ENCODE measurements at regions of chr2 and their contacts with region 1.

Region 1: DNA sequence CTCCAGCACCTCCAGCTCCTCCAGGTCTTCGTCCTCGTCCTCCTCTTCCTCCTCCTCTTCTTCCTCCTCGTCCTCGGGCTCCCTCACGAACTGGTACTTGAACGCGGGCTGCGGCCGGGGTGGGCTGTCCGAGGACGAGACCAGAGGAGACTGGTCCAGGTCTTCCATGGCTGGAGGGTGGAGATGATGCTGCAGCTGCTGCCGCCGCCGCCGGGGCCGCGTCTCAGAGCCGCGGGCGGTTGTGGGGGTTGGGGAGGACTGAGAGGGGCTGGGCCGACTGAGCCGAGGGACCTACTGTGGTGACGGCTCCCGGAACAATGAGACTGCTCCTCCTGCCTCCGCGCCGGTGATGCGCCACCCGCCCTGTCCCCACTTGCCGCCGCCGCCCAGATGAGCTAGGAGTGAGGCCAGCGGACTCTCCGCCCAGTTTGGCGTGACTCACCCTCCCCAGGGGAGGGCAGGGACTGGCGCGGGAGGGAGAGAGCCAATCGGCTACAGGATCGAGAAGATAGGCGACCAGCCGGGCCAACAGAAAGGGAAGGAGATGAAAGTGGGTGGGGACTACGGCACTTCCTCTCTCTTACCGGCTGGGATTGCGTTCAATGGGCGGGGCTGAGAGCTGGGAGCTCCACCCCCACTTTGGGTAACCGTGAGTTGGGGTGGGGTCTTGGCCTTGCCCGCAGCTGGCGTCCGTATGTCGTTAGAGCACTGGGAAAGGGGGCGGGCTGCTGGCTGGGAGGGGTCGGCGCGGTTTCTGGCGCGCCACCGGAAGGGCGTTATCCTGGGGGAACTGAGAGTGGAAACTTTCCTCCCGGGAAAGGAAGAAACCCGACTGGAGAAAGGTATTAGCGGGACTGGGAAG is at the start of gene RTN4:
- DNase-seq: peak; percentile 99
- ATAC-seq: peak; percentile 90
- H3K4me3 ChIP-seq: peak within 1 kb of the TSS; percentile 87 to 97 (median 94)
- H3K27ac ChIP-seq: peak within 1 kb of the TSS; percentile 84
- H3K4me1 ChIP-seq: peaks cover 41% of the 10 kb centered on the region
- H3K27me3 ChIP-seq: no peaks in the 10 kb centered on the region; a peak in 1 of 5 replicates
- CTCF ChIP-seq: peak; percentile 37; the same call in 1 of the 2 replicates
- EP300 ChIP-seq: no peak
- POLR2A ChIP-seq: peak; percentile 90 to 99
- RAD21 ChIP-seq: peak; percentile 53; the same call in 1 of the 2 replicates
- total RNA-seq, gene RTN4: 67.4 and 98.4 TPM in 2 replicates

Region 2: GRCh38 chr2:54545702-54546450 is 504.5 kb before region 1 on chr2:
- CTCF ChIA-PET with region 1: no interaction called
- POLR2A ChIA-PET with region 1: no interaction called
- in situ Hi-C with region 1: no loop called
- intact Hi-C with region 1: no loop called
- DNase-seq: peak; percentile 97
- ATAC-seq: peak; percentile 99
- H3K4me3 ChIP-seq: peak overlapping the region in 2 of 3 experiments; percentile 9 to 19; a peak in 3 of 6 replicates
- H3K27ac ChIP-seq: peak overlapping the region; percentile 80
- H3K4me1 ChIP-seq: peaks cover 72% of the 10 kb centered on the region
- H3K27me3 ChIP-seq: no peaks in the 10 kb centered on the region
- CTCF ChIP-seq: 0 out of 2 replicates have a peak, but pooled peaks have one; percentile 1
- EP300 ChIP-seq: peak; percentile 92 to 95
- POLR2A ChIP-seq: peak in 1 of 2 experiments; percentile 35; a peak in 1 of 4 replicates
- RAD21 ChIP-seq: no peak

Region 3: GRCh38 chr2:54560146-54560881 is 490.1 kb before region 1 on chr2:
- CTCF ChIA-PET with region 1: no interaction called
- POLR2A ChIA-PET with region 1: no interaction called
- in situ Hi-C with region 1: no loop called
- intact Hi-C with region 1: no loop called
- DNase-seq: no peak
- ATAC-seq: no peak
- H3K4me3 ChIP-seq: peak overlapping the region; percentile 86 to 99 (median 91)
- H3K27ac ChIP-seq: peak overlapping the region; percentile 93
- H3K4me1 ChIP-seq: peaks cover 67% of the 10 kb centered on the region
- H3K27me3 ChIP-seq: no peaks in the 10 kb centered on the region; a peak in 1 of 5 replicates
- CTCF ChIP-seq: no peak
- EP300 ChIP-seq: no peak
- POLR2A ChIP-seq: no peak; a peak in 1 of 4 replicates
- RAD21 ChIP-seq: no peak

Region 4: GRCh38 chr2:55010149-55010591 is 40.2 kb before region 1 on chr2:
- CTCF ChIA-PET with region 1: interaction called, 11 read pairs
- POLR2A ChIA-PET with region 1: interaction called, 18 read pairs
- in situ Hi-C with region 1: no loop called
- intact Hi-C with region 1: loop called (anchors 1 kb)
- DNase-seq: no peak
- ATAC-seq: no peak
- H3K4me3 ChIP-seq: no peak overlapping the region
- H3K27ac ChIP-seq: no peak overlapping the region
- H3K4me1 ChIP-seq: peaks cover 57% of the 10 kb centered on the region
- H3K27me3 ChIP-seq: no peaks in the 10 kb centered on the region
- CTCF ChIP-seq: no peak
- EP300 ChIP-seq: no peak
- POLR2A ChIP-seq: no peak
- RAD21 ChIP-seq: no peak

Region 5: GRCh38 chr2:55026202-55026601 is 24.2 kb before region 1 on chr2:
- CTCF ChIA-PET with region 1: no interaction called
- POLR2A ChIA-PET with region 1: interaction called, 10 read pairs
- in situ Hi-C with region 1: no loop called
- intact Hi-C with region 1: no loop called
- DNase-seq: peak; percentile 81
- ATAC-seq: peak; percentile 89
- H3K4me3 ChIP-seq: no peak overlapping the region
- H3K27ac ChIP-seq: peak overlapping the region; percentile 57
- H3K4me1 ChIP-seq: peaks cover 61% of the 10 kb centered on the region
- H3K27me3 ChIP-seq: no peaks in the 10 kb centered on the region
- CTCF ChIP-seq: no peak
- EP300 ChIP-seq: peak in 1 of 2 experiments; percentile 45; a peak in 1 of 4 replicates
- POLR2A ChIP-seq: no peak
- RAD21 ChIP-seq: 0 out of 2 replicates have a peak, but pooled peaks have one; percentile 14

Region 6: GRCh38 chr2:55168221-55169154 is 118.1 kb after region 1 on chr2:
- CTCF ChIA-PET with region 1: no interaction called
- POLR2A ChIA-PET with region 1: interaction called, 3 read pairs
- in situ Hi-C with region 1: no loop called
- intact Hi-C with region 1: loop called (anchors 1 kb)
- DNase-seq: peak; percentile 70
- ATAC-seq: peak; percentile 78
- H3K4me3 ChIP-seq: peak overlapping the region in 2 of 3 experiments; percentile 5 to 30; a peak in 3 of 6 replicates
- H3K27ac ChIP-seq: no peak overlapping the region
- H3K4me1 ChIP-seq: peaks cover 31% of the 10 kb centered on the region
- H3K27me3 ChIP-seq: peaks cover 0 to 6% of the 10 kb centered on the region in 2 experiments; a peak in 2 of 5 replicates
- CTCF ChIP-seq: peak; percentile 86
- EP300 ChIP-seq: no peak
- POLR2A ChIP-seq: no peak
- RAD21 ChIP-seq: peak; percentile 83

Region 7: GRCh38 chr2:55268907-55269644 is 218.7 kb after region 1 on chr2 and contains the start of gene MTIF2:
- CTCF ChIA-PET with region 1: no interaction called
- POLR2A ChIA-PET with region 1: interaction called, 4 read pairs
- in situ Hi-C with region 1: no loop called
- intact Hi-C with region 1: loop called (anchors 1 kb)
- DNase-seq: peak; percentile 95
- ATAC-seq: peak; percentile 99
- H3K4me3 ChIP-seq: peak within 1 kb of the TSS; percentile 73 to 81 (median 73)
- H3K27ac ChIP-seq: peak within 1 kb of the TSS; percentile 91
- H3K4me1 ChIP-seq: peaks cover 16% of the 10 kb centered on the region
- H3K27me3 ChIP-seq: no peaks in the 10 kb centered on the region; a peak in 1 of 5 replicates
- CTCF ChIP-seq: peak; percentile 64
- EP300 ChIP-seq: peak; percentile 69 to 78
- POLR2A ChIP-seq: peak; percentile 99
- RAD21 ChIP-seq: no peak; the same call in 1 of the 2 replicates
- total RNA-seq, gene MTIF2: 92.1 and 118 TPM in 2 replicates